Panc1 (cell line): ENCODE measurements at regions of chr7 and their contacts with region 1.

Region 1: DNA sequence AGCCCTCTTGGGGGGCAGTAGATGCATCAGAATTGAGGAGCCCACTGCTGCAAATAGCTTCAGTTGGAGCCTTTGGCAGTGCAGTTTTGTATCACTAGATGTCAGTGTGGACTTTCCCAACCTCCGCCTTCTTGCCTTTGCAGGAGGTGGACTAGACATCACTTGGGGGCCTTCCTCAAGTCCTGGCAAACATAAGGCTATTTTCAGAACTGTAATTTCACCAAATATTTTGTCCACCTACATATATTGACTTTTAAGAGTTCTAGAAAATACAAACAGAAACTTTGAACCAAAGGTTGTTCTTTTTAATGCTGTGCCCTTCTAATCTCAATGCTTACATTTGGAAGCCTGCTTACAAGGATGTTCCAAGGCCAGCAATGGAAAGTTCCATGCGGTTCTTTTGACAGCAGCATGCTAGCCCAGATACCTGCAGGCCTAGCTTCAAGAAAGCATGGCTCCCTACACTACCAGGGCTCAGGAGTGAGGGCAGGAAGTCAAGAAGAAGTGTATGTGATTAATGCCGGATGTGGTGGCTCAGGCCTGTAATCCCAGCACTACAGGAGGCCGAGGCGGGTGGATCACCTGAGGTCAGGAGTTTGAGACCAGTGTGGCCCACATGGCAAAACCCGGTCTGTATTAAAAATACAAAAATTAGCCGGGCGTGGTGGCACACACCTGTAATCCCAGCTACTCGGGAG is 8.0 kb upstream of the ZNRF2 start:
- DNase-seq: peak; percentile 63
- ATAC-seq: peak; percentile 96
- H3K4me3 ChIP-seq: no peak overlapping the region
- H3K27ac ChIP-seq: no peak overlapping the region
- H3K4me1 ChIP-seq: no peaks in the 10 kb centered on the region
- H3K27me3 ChIP-seq: no peaks in the 10 kb centered on the region; the same call in 1 of the 2 replicates
- CTCF ChIP-seq: peak; percentile 94

Region 2: GRCh38 chr7:30062591-30062990 is 213.8 kb before region 1 on chr7:
- CTCF ChIA-PET with region 1: no interaction called
- POLR2A ChIA-PET with region 1: no interaction called
- in situ Hi-C with region 1: no loop called
- intact Hi-C with region 1: no loop called
- DNase-seq: peak; percentile 17
- ATAC-seq: peak; percentile 85
- H3K4me3 ChIP-seq: no peak overlapping the region
- H3K27ac ChIP-seq: no peak overlapping the region
- H3K4me1 ChIP-seq: no peaks in the 10 kb centered on the region
- H3K27me3 ChIP-seq: no peaks in the 10 kb centered on the region
- CTCF ChIP-seq: peak; percentile 44; the same call in 1 of the 2 replicates

Region 3: GRCh38 chr7:30164567-30164966 is 111.8 kb before region 1 on chr7:
- CTCF ChIA-PET with region 1: interaction called, 6 read pairs
- POLR2A ChIA-PET with region 1: no interaction called
- in situ Hi-C with region 1: no loop called
- intact Hi-C with region 1: loop called (anchors 5 kb)
- DNase-seq: peak; percentile 30
- ATAC-seq: peak; percentile 77
- H3K4me3 ChIP-seq: no peak overlapping the region
- H3K27ac ChIP-seq: no peak overlapping the region
- H3K4me1 ChIP-seq: peaks cover 6% of the 10 kb centered on the region
- H3K27me3 ChIP-seq: peaks cover 5% of the 10 kb centered on the region; the same call in 1 of the 2 replicates
- CTCF ChIP-seq: peak; percentile 85

Region 4: DNA sequence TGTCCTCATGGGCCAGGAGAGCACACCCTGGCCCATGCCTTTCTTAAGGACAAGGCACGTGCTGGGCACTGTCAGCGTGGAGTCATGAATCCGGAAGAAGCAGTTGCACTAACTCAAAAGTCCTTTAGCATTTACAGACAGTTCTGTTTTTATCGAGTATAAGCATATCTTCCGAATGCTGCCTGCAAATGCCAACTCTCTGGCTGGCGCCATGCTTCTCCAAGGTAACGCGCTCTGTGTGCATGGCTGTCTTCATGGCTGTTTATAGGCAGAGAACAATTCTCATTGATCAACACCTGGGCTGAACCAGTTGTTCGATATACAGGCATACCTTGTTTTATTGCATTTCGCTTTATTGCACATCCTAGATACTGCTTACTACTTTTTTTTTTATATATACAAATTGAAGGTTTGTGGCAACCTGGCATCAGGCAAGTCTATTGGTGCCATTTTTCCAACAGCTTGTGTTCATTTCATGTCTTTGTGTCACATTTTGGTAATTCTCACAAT is 19.9 kb before region 1 on chr7:
- CTCF ChIA-PET with region 1: no interaction called
- POLR2A ChIA-PET with region 1: interaction called, 11 read pairs
- in situ Hi-C with region 1: no loop called
- intact Hi-C with region 1: no loop called
- DNase-seq: no peak
- ATAC-seq: no peak
- H3K4me3 ChIP-seq: no peak overlapping the region
- H3K27ac ChIP-seq: no peak overlapping the region
- H3K4me1 ChIP-seq: no peaks in the 10 kb centered on the region
- H3K27me3 ChIP-seq: peaks cover 3% of the 10 kb centered on the region; the same call in 1 of the 2 replicates
- CTCF ChIP-seq: no peak

Region 5: GRCh38 chr7:30412810-30413504 is 136.6 kb after region 1 on chr7:
- CTCF ChIA-PET with region 1: interaction called, 4 read pairs
- POLR2A ChIA-PET with region 1: no interaction called
- in situ Hi-C with region 1: no loop called
- intact Hi-C with region 1: loop called (anchors 2 kb)
- DNase-seq: peak; percentile 52
- ATAC-seq: peak; percentile 94
- H3K4me3 ChIP-seq: no peak overlapping the region
- H3K27ac ChIP-seq: no peak overlapping the region
- H3K4me1 ChIP-seq: no peaks in the 10 kb centered on the region
- H3K27me3 ChIP-seq: no peaks in the 10 kb centered on the region
- CTCF ChIP-seq: peak; percentile 58